Left ventricle myocardium superior (tissue), 1 donor: ENCODE measurements at regions of chr20 and their contacts with region 1.

Region 1: GRCh38 chr20:62143118-62143973 is at the starts of genes PSMA7 and SS18L1:
- DNase-seq: peak; percentile 93
- ATAC-seq: peak; percentile 94
- total RNA-seq, gene PSMA7: 240 TPM
- total RNA-seq, gene SS18L1: 10.7 TPM

Region 2: DNA sequence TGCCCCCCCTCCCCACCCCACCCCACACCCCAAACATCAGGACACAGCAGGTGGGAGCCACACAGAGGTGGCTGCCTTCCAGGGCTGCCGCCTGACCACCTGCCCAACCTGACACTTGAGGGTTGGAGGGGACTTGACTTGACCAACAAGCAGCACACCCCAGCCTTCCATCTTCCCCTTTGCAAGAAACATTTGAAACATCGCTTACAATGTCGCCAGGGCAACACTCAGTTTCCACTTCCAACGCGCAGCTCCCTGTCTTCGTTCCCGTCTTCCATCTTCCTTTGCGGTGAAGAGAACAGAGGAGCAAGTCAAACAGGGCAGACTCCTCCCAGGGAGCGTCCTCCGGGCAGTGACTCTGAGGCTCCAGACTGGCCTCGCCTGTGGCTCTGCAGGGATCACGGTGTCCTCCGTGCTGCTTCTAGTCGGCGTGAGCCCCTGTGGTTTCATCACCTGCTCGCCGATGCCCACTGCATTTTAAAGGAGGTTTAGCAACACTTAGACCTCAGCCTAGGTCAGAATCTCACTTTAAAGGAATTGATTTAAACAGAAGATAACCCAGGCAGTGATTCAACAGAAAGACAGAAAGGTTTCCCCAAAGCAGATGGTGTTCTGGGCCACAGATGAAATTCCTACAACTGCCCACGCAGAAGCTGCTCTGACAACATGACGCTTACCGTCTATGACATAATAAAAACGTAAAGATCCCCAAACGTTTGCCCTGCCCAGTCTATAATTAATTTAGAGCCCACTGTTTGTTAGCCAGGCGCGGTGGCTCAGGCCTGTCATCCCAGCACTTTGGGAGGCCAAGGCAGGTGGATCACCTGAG is 208.4 kb before region 1 on chr20:
- intact Hi-C with region 1: no loop called
- DNase-seq: peak; percentile 11
- ATAC-seq: no peak

Region 3: DNA sequence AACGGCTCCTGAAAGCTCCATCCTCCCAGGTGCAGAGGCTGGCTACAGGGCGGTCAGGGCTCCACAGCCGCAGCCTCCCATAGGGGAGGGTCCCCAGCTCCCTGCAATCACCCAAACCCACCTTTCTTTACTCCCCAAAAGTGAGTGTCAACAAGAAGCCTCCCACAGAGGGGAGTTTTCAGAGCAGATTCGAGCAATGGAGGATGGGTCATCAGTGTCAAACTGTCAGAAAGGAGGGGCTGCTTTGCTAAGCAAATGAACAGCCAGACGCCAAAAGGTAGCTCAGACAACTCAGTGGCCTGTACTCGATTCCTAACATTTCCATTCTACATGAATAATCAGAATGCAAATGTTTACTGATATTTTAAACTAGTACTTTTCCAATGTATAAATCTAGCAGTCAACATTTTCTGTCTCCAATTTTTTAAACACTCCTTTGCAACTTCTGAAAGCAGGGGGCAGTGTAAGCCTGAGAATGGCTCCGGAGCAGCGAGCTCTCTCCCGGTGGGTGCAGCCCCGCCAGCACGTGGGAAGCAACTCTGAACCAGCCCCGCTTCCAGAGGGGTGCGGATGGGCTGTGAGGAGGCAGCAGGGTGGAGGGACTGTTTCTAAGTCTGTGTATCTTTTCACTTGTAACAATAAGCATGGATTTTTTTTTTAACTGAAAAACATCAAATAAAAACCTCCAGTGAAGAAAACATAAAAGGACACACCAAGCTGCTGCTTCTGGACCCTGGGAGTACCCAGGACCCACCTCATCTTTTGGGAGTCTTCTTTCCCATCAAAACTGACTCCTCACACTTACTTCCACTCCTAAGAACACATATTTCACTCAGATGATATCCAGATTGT is 132.6 kb before region 1 on chr20:
- intact Hi-C with region 1: loop called (anchors 10 kb)
- DNase-seq: peak; percentile 57
- ATAC-seq: peak; percentile 67